ENCODE measurements at regions of chr5 and their contacts with region 1.

Region 1: GRCh38 chr5:109409844-109410388 is at the start of gene PJA2:
- DNase-seq: peak; percentile 93 to 98
- ATAC-seq: peak; percentile 69 to 89 (median 78)
- H3K4me3 ChIP-seq: peak within 1 kb of the TSS; percentile 99
- H3K4me3 Mint-ChIP-seq: peak within 1 kb of the TSS; percentile 99
- H3K27ac ChIP-seq: peak within 1 kb of the TSS; percentile 100
- H3K27ac Mint-ChIP-seq: peak within 1 kb of the TSS; percentile 99 to 100
- H3K4me1 ChIP-seq: peaks cover 3% of the 10 kb centered on the region
- H3K4me1 Mint-ChIP-seq: peaks cover 46 to 53% of the 10 kb centered on the region in 2 donors
- H3K27me3 ChIP-seq: no peaks in the 10 kb centered on the region
- H3K27me3 Mint-ChIP-seq: no peaks in the 10 kb centered on the region
- CTCF ChIP-seq: no peak
- total RNA-seq, gene PJA2: 85.6 to 99.8 (median 90.8) TPM

Region 2: GRCh38 chr5:108381954-108382783 is 1027.7 kb before region 1 on chr5 and contains the start of gene FBXL17:
- intact Hi-C with region 1: loop called (anchors 1 kb)
- DNase-seq: peak; percentile 90 to 97
- ATAC-seq: peak; percentile 76 to 91 (median 79)
- H3K4me3 ChIP-seq: peak within 1 kb of the TSS; percentile 62
- H3K4me3 Mint-ChIP-seq: peak within 1 kb of the TSS; percentile 89
- H3K27ac ChIP-seq: peak within 1 kb of the TSS; percentile 95
- H3K27ac Mint-ChIP-seq: peak within 1 kb of the TSS; percentile 93 to 94
- H3K4me1 ChIP-seq: peaks cover 8% of the 10 kb centered on the region
- H3K4me1 Mint-ChIP-seq: peaks cover 39 to 41% of the 10 kb centered on the region in 2 donors
- H3K27me3 ChIP-seq: no peaks in the 10 kb centered on the region
- H3K27me3 Mint-ChIP-seq: peaks cover 0 to 2% of the 10 kb centered on the region in 2 donors
- CTCF ChIP-seq: no peak
- total RNA-seq, gene FBXL17: 34.2 to 46.8 (median 34.9) TPM

Region 3: GRCh38 chr5:108727651-108728565 is 682.0 kb before region 1 on chr5:
- intact Hi-C with region 1: loop called (anchors 5 kb)
- DNase-seq: peak; percentile 53 to 61
- ATAC-seq: peak; percentile 77 to 89 (median 80)
- H3K4me3 ChIP-seq: peak overlapping the region; percentile 96
- H3K4me3 Mint-ChIP-seq: peak overlapping the region; percentile 87
- H3K27ac ChIP-seq: peak overlapping the region; percentile 91
- H3K27ac Mint-ChIP-seq: peak overlapping the region; percentile 77 to 82
- H3K4me1 ChIP-seq: peaks cover 10% of the 10 kb centered on the region
- H3K4me1 Mint-ChIP-seq: peaks cover 25 to 33% of the 10 kb centered on the region in 2 donors
- H3K27me3 ChIP-seq: no peaks in the 10 kb centered on the region
- H3K27me3 Mint-ChIP-seq: peaks cover 0 to 5% of the 10 kb centered on the region in 2 donors
- CTCF ChIP-seq: no peak

Region 4: GRCh38 chr5:108748401-108749127 is 661.4 kb before region 1 on chr5:
- intact Hi-C with region 1: loop called (anchors 1 kb)
- DNase-seq: peak; percentile 97 to 98
- ATAC-seq: peak; percentile 87 to 98 (median 92)
- H3K4me3 ChIP-seq: peak overlapping the region; percentile 88
- H3K4me3 Mint-ChIP-seq: peak overlapping the region; percentile 96
- H3K27ac ChIP-seq: peak overlapping the region; percentile 92
- H3K27ac Mint-ChIP-seq: peak overlapping the region; percentile 91 to 95
- H3K4me1 ChIP-seq: peaks cover 12% of the 10 kb centered on the region
- H3K4me1 Mint-ChIP-seq: peaks cover 21% of the 10 kb centered on the region in 2 donors
- H3K27me3 ChIP-seq: no peaks in the 10 kb centered on the region
- H3K27me3 Mint-ChIP-seq: no peaks in the 10 kb centered on the region
- CTCF ChIP-seq: no peak

Region 5: DNA sequence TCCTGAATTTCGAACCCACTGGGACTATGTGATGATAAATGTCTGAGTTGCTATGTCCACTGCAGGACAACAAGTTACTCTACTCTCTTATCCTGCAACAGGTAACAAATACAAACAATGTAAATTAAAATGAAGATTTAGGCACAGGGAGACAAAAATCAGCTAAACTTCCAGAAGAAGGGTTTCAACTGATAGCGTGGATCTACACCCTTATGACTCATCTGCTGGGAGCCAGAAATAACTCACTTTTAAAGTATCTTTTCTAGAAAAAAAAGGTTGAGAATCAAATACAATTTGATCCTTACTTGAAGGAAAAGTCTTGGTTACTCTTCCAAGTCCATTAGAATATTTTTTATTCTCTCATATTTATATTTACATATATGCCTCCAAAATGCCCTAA is 21.5 kb before region 1 on chr5:
- intact Hi-C with region 1: loop called (anchors 2 kb)
- DNase-seq: no peak
- ATAC-seq: no peak
- H3K4me3 ChIP-seq: no peak overlapping the region
- H3K4me3 Mint-ChIP-seq: no peak overlapping the region
- H3K27ac ChIP-seq: no peak overlapping the region
- H3K27ac Mint-ChIP-seq: peak overlapping the region; percentile 52 to 78
- H3K4me1 ChIP-seq: peaks cover 10% of the 10 kb centered on the region
- H3K4me1 Mint-ChIP-seq: peaks cover 70 to 84% of the 10 kb centered on the region in 2 donors
- H3K27me3 ChIP-seq: no peaks in the 10 kb centered on the region
- H3K27me3 Mint-ChIP-seq: no peaks in the 10 kb centered on the region
- CTCF ChIP-seq: no peak

Region 6: GRCh38 chr5:109688971-109689739 is 279.2 kb after region 1 on chr5:
- intact Hi-C with region 1: loop called (anchors 2 kb)
- DNase-seq: peak; percentile 78 to 95
- ATAC-seq: peak; percentile 79 to 92 (median 86)
- H3K4me3 ChIP-seq: peak overlapping the region; percentile 62
- H3K4me3 Mint-ChIP-seq: peak overlapping the region; percentile 88
- H3K27ac ChIP-seq: peak overlapping the region; percentile 83
- H3K27ac Mint-ChIP-seq: peak overlapping the region; percentile 85 to 93
- H3K4me1 ChIP-seq: peaks cover 12% of the 10 kb centered on the region
- H3K4me1 Mint-ChIP-seq: peaks cover 35 to 44% of the 10 kb centered on the region in 2 donors
- H3K27me3 ChIP-seq: no peaks in the 10 kb centered on the region
- H3K27me3 Mint-ChIP-seq: peaks cover 0 to 9% of the 10 kb centered on the region in 2 donors
- CTCF ChIP-seq: peak; percentile 7

Region 7: DNA sequence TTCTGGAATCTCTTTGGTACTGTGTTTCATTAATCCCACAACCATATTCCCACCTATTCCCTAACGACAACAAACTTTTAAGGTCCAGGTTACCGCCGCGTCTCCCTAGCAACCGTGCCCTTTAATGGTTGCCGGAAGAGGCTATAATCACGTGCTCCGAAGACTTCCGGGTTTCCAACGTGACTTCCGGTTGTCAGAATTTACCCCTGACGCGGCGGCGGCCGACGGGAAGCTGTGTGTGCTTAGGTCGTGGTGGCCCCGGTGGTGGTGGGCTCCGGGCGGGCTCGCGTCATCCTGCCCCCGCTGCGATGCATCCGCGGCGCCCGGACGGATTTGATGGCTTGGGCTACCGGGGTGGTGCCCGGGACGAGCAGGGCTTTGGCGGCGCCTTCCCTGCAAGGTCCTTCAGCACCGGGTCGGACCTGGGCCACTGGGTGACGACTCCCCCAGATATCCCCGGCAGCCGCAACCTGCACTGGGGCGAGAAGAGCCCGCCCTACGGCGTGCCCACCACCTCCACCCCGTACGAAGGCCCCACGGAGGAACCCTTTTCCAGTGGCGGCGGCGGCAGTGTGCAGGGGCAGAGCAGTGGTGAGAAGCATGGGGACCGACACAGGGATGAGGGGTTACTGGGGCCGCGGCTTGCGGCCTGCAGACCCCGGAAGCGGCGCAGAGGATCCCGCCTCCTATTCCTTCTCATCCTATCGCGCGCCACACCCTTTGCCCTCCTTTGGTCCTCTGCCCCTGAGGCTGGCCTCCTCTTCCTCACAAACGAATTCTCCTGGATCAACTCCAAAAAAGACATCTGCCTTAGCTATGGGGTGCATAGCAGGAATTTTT is 1329.1 kb after region 1 on chr5 and contains the start of gene SLC25A46:
- intact Hi-C with region 1: loop called (anchors 2 kb)
- DNase-seq: peak; percentile 84 to 96
- ATAC-seq: peak; percentile 77 to 90 (median 87)
- H3K4me3 ChIP-seq: peak within 1 kb of the TSS; percentile 87
- H3K4me3 Mint-ChIP-seq: peak within 1 kb of the TSS; percentile 97
- H3K27ac ChIP-seq: peak within 1 kb of the TSS; percentile 88
- H3K27ac Mint-ChIP-seq: peak within 1 kb of the TSS; percentile 96 to 97
- H3K4me1 ChIP-seq: peaks cover 10% of the 10 kb centered on the region
- H3K4me1 Mint-ChIP-seq: peaks cover 27 to 36% of the 10 kb centered on the region in 2 donors
- H3K27me3 ChIP-seq: peaks cover 3% of the 10 kb centered on the region
- H3K27me3 Mint-ChIP-seq: peaks cover 7 to 14% of the 10 kb centered on the region in 2 donors
- CTCF ChIP-seq: no peak
- total RNA-seq, gene SLC25A46: 25.5 to 35.4 (median 34.5) TPM